A673 (cell line): ENCODE measurements at regions of chr4 and their contacts with region 1.

Region 1: GRCh38 chr4:15238720-15239119 is 189.1 kb upstream of the C1QTNF7 start:
- DNase-seq: peak; percentile 69
- H3K4me3 ChIP-seq: no peak overlapping the region
- H3K27ac ChIP-seq: no peak overlapping the region
- H3K4me1 ChIP-seq: peaks cover 32% of the 10 kb centered on the region
- H3K27me3 ChIP-seq: no peaks in the 10 kb centered on the region
- CTCF ChIP-seq: peak; percentile 82

Region 2: GRCh38 chr4:13580036-13580435 is 1658.7 kb before region 1 on chr4:
- CTCF ChIA-PET with region 1: no interaction called
- POLR2A ChIA-PET with region 1: no interaction called
- intact Hi-C with region 1: no loop called
- DNase-seq: no peak
- H3K4me3 ChIP-seq: no peak overlapping the region
- H3K27ac ChIP-seq: no peak overlapping the region
- H3K4me1 ChIP-seq: no peaks in the 10 kb centered on the region
- H3K27me3 ChIP-seq: no peaks in the 10 kb centered on the region
- CTCF ChIP-seq: no peak

Region 3: DNA sequence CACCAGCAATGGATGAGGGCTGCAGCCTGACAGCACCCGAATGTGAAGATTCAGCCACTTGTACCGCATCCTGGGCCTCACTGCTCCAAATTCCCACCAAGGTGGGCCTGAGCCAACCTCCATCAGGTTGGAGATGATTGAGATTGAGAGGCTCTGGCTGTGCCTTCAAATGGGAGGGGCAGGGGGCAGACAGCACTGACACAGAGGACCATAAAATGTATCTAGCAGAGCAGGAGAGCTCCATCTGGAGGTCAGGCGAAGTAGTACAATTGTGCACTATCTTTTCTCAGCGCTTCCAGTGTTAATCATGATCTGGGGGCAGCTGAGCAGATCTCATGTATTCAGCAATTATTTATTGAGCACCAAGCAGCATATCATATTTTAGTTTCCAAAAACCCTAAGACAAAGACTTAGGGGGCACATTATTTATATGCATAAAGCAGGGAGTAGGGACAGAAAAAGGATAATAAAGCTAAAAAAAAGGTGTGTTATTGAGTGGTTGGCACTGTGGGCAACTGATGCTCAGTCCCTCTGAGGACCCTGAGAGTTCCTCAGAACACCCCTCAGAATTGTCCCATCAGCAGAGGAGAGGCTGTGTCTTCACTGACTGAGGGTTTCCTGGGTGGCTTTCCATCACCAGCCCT is 157.6 kb after region 1 on chr4:
- CTCF ChIA-PET with region 1: interaction called, 4 read pairs
- POLR2A ChIA-PET with region 1: no interaction called
- intact Hi-C with region 1: loop called (anchors 2 kb)
- DNase-seq: peak; percentile 72
- H3K4me3 ChIP-seq: no peak overlapping the region
- H3K27ac ChIP-seq: no peak overlapping the region
- H3K4me1 ChIP-seq: peaks cover 25% of the 10 kb centered on the region
- H3K27me3 ChIP-seq: no peaks in the 10 kb centered on the region
- CTCF ChIP-seq: peak; percentile 85

Region 4: GRCh38 chr4:15649914-15650545 is 411.3 kb after region 1 on chr4:
- CTCF ChIA-PET with region 1: no interaction called
- POLR2A ChIA-PET with region 1: no interaction called
- intact Hi-C with region 1: loop called (anchors 2 kb)
- DNase-seq: peak; percentile 87
- H3K4me3 ChIP-seq: no peak overlapping the region
- H3K27ac ChIP-seq: peak overlapping the region; percentile 41
- H3K4me1 ChIP-seq: peaks cover 36% of the 10 kb centered on the region
- H3K27me3 ChIP-seq: no peaks in the 10 kb centered on the region
- CTCF ChIP-seq: peak; percentile 82